Left colon (tissue), 2 donors: ENCODE measurements at regions of chr6 and their contacts with region 1.

Region 1: GRCh38 chr6:10800829-10801535 is 37.4 kb downstream of the MAK start:
- DNase-seq: peak in 1 of 2 donors; percentile 49
- ATAC-seq: peak; percentile 91

Region 2: GRCh38 chr6:10478187-10479040 is 322.6 kb before region 1 on chr6:
- intact Hi-C with region 1: loop called in 1 of 2 experiments (anchors 5 kb)
- DNase-seq: no peak
- ATAC-seq: no peak